ENCODE measurements at regions of chr17 and their contacts with region 1.

Region 1: DNA sequence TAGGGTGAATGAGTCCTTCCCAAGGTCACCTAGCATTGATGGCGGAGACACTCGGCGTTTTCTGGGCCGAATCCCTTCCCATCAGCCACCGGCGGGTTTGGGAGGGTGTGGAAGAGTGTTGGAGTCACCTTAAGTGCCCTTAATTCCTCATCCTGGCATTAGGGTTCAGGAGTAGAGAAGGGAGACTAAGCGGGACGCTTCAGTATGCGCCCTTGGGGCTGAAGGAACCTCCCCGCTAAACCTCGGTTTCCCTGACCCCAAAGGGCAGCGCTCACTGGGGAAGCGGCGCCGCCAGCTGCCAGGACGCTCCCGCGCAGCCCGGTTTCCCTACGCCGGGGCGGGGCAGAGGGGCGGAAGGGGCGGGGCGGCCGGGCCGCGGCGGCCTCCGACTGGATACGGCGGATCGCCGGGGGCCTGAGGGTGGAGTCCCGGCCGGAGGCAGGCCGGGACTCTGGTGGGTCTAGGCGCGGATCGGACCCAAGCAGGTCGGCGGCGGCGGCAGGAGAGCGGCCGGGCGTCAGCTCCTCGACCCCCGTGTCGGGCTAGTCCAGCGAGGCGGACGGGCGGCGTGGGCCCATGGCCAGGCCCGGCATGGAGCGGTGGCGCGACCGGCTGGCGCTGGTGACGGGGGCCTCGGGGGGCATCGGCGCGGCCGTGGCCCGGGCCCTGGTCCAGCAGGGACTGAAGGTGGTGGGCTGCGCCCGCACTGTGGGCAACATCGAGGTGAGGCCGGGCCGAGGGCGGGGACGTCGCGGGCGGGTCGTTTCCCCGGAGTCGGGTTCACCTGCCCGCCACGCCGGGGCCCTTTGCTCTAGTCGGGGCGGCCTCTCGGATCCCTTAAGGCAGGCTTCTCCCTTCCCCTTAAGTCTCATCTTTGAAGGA is at the start of gene DHRS11:
- DNase-seq: peak; percentile 86 to 91
- ATAC-seq: peak; percentile 93 to 96 (median 94)
- H3K4me3 ChIP-seq: peak within 1 kb of the TSS; percentile 98
- H3K27ac ChIP-seq: peak within 1 kb of the TSS; percentile 81
- H3K4me1 ChIP-seq: peaks cover 16% of the 10 kb centered on the region
- H3K27me3 ChIP-seq: no peaks in the 10 kb centered on the region
- CTCF ChIP-seq: no peak
- total RNA-seq, gene DHRS11: 9.4 to 16.0 (median 13.4) TPM

Region 2: DNA sequence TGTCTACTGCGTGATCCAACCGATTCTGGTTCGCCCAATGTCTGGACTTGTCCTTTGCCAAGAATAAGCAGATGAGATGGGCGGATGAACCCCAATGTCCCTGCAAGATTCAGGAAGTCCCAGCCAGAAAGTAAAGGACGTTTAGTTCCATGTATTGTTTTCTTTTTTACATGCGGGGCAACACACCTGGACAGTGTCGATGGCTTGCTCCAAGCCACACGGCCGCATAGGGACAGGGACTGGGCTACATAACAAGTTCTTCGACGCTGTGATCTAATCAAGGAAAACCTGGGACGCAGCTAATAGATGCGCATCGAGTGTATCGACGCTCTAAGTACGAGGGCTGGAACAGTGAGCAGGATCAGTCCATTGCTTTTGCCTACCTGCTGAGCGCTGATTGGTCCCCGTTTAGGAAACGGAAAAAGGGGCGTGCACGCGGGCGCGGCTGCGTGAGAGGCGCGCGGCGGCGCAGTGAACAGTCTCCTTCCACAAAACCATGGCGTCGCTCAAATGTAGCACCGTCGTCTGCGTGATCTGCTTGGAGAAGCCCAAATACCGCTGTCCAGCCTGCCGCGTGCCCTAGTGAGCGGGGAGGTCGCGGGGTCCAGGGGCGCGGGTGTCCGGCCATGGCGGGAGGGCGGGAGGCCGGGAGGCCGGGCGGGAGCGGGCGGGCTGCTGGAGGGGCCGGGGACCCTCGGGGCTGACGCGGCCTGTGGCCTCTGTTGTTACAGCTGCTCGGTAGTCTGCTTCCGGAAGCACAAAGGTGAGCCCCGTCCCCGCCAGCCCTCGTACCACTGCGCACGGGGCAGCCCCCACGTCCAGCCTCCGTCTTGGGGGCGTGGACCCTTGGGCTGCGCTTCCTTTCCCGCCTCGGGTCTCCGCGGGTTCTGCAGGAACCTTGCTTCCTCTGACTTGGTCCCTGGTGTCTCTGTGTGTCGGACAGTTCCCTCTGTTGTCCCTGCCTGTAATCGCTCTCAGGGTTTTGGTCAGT is 105.2 kb before region 1 on chr17 and contains the start of gene ZNHIT3:
- intact Hi-C with region 1: loop called in 1 of 2 experiments (anchors 5 kb)
- DNase-seq: peak; percentile 91 to 94
- ATAC-seq: peak; percentile 92 to 96 (median 96)
- H3K4me3 ChIP-seq: peak within 1 kb of the TSS; percentile 99
- H3K27ac ChIP-seq: peak within 1 kb of the TSS; percentile 83
- H3K4me1 ChIP-seq: peaks cover 17% of the 10 kb centered on the region
- H3K27me3 ChIP-seq: no peaks in the 10 kb centered on the region
- CTCF ChIP-seq: no peak
- total RNA-seq, gene ZNHIT3: 22.7 to 32.3 (median 31.1) TPM

Region 3: DNA sequence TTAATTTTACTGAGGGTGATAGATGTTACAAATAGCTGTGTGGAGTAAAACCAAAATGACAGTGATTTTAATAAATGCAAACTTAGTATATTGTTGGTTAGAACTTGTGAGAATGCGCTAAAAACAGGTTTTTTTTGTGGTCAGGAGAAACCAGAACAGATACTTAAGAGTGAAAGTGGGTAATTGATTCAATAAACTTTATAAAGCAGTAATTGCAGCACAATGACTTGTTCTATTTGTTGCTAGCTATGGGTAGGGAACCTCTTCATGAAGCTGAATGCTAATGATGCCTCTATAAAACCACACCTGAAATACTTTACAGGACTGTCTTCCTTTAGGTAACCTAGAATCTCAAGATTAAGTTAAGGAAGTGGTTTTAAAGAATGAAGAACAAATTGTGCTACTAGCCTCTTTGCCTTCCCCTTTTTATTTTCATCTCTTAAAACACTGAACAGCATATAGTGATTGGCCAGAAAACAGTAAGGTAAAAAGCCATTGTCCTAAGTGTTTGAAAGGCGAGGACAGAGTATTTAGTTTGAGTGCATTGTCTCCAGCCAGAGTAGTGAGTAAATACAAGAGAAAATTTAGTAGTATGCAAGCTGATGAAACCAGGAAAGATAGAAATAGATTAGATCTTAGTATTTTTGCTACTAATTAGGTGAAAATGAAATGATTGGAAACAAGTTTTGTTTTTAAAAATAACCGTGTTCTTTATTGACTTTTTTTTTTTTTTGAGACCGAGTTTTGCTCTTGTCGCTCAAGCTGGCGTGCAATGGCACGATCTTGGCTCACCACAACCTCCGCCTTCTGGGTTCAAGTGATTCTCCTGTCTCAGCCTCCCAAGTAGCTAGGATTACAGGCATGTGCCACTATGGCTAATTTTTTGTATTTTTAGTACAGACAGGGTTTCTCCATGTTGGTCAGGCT is 40.9 kb before region 1 on chr17:
- intact Hi-C with region 1: loop called (anchors 5 kb)
- DNase-seq: no peak
- ATAC-seq: no peak
- H3K4me3 ChIP-seq: no peak overlapping the region
- H3K27ac ChIP-seq: no peak overlapping the region
- H3K4me1 ChIP-seq: peaks cover 52% of the 10 kb centered on the region
- H3K27me3 ChIP-seq: no peaks in the 10 kb centered on the region
- CTCF ChIP-seq: no peak

Region 4: DNA sequence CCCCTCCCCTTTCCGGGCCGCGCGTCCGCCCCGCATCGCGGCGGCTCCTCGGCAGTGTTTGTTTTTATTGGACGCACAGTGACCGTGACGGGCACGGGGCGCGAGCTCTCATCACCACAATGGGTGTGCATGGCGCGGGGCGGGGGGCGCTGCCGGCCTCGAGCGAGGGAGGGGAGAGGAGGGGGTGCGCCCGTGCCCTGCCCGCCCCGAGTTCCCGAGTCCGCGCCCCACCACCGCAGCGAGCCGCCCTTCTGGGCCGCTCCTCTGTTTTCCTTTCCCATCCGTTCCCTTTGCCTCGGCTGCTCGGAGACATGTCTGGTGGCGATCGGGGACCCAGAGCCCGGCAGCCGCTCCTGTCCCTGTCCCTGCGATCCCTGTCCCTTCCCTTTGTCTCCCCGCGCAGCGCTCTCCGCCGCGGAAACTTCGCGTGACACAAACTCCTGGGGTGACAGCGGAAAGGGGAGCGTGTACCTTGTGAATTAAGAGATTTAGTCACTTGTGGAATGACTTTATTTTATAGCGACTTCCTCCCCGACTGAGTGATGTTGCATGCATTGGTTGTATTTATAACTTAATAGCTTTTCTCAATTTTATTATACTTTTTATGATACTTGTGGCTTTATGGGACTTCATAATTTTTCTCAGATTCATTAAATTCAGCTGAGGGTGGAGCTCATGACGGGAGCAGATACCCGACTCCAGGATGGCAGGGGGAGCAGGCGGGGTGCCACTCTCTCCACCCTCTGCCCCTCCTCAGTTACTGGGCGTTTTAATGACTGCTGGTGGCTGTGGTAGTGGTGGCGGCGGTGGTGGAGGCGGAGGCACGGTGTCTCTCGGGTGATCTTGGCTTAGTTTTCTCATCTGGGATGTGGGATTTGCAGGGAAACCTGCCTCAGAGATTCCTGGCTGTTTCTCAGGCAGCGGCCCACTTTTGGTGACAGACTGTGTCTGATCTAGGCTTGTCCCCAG is 50.5 kb after region 1 on chr17:
- intact Hi-C with region 1: no loop called
- DNase-seq: no peak
- ATAC-seq: peak in 3 of 4 donors; percentile 22 to 52 (median 34)
- H3K4me3 ChIP-seq: peak overlapping the region; percentile 59
- H3K27ac ChIP-seq: no peak overlapping the region
- H3K4me1 ChIP-seq: peaks cover 11% of the 10 kb centered on the region
- H3K27me3 ChIP-seq: peaks cover 0 to 83% (median 24%) of the 10 kb centered on the region in 3 donors
- CTCF ChIP-seq: no peak

Region 5: DNA sequence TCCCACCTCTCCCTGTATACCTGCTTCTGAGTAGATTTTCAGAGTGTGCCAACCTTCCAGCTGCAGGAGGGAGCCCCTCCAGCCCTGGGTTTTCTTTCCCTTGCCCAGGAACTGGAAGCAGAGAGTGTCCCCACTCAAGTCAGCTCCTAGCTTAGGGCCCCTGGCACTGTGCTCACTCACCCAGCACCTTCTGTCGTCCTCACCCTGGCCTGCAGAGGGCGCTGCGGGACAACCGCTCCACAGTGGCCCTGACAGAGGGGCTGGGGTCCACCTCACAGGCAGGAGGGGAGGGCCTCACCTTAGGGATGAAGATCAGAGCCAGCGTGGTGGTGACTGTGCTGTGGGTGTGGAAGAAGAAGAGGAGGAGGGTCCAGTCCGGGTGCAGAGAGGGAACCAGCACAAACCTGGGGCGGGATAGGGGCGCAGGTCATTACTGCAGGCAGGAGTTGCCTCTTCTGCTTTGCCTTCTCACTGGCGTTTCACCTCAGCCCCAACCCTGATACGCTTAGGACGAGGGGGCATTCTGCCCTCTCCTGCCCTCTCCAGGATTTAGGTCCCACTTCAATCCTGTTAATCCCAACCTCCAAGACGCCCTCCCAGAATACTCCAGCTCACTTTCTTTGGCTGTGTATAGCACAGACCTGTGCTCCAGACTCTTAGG is 1742.1 kb after region 1 on chr17:
- intact Hi-C with region 1: no loop called
- DNase-seq: peak in 1 of 2 donors; percentile 61
- ATAC-seq: peak; percentile 39 to 62 (median 50)
- H3K4me3 ChIP-seq: no peak overlapping the region
- H3K27ac ChIP-seq: no peak overlapping the region
- H3K4me1 ChIP-seq: no peaks in the 10 kb centered on the region
- H3K27me3 ChIP-seq: peaks cover 0 to 5% (median 0%) of the 10 kb centered on the region in 3 donors
- CTCF ChIP-seq: peak; percentile 22